ENCODE measurements at regions of chr7 and their contacts with region 1.

Region 1: DNA sequence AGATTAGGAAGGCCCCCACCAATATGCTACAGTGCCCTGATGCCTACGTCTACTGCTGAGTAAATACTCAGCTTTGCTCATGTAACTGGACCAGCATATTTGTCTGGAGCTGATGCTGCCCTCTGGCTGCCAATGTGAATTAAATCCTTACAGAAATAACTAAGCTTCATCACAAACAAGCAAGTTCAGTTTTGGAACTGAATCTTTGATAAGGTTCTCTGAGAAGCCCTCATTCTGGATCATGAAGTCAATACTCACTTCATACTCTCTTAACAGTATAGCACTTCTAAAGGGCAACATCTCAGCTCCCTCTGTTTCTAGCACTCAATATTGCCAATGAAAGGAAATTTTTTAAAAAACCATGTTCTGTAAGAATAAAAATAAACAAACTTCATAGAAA is 246.7 kb downstream of the ETV1 start:
- DNase-seq: peak; percentile 38 to 48
- H3K4me3 ChIP-seq: no peak overlapping the region
- H3K4me3 Mint-ChIP-seq: no peak overlapping the region
- H3K27ac Mint-ChIP-seq: no peak overlapping the region
- H3K4me1 ChIP-seq: peaks cover 12% of the 10 kb centered on the region; the same call in 1 of the 2 replicates
- H3K4me1 Mint-ChIP-seq: peaks cover 6% of the 10 kb centered on the region
- H3K27me3 ChIP-seq: no peaks in the 10 kb centered on the region
- H3K27me3 Mint-ChIP-seq: no peaks in the 10 kb centered on the region
- CTCF ChIP-seq: peak; percentile 48 to 49

Region 2: GRCh38 chr7:12674849-12675248 is 1068.0 kb before region 1 on chr7:
- CTCF ChIA-PET with region 1: no interaction called
- POLR2A ChIA-PET with region 1: no interaction called
- intact Hi-C with region 1: loop called (anchors 10 kb)
- DNase-seq: peak; percentile 49 to 72
- H3K4me3 ChIP-seq: no peak overlapping the region
- H3K4me3 Mint-ChIP-seq: no peak overlapping the region
- H3K27ac Mint-ChIP-seq: no peak overlapping the region
- H3K4me1 ChIP-seq: no peaks in the 10 kb centered on the region; the same call in 1 of the 2 replicates
- H3K4me1 Mint-ChIP-seq: peaks cover 19% of the 10 kb centered on the region
- H3K27me3 ChIP-seq: no peaks in the 10 kb centered on the region
- H3K27me3 Mint-ChIP-seq: no peaks in the 10 kb centered on the region
- CTCF ChIP-seq: peak; percentile 44 to 59

Region 3: GRCh38 chr7:13524076-13524475 is 218.7 kb before region 1 on chr7:
- CTCF ChIA-PET with region 1: no interaction called
- POLR2A ChIA-PET with region 1: no interaction called
- intact Hi-C with region 1: loop called (anchors 1 kb)
- DNase-seq: no peak
- H3K4me3 ChIP-seq: no peak overlapping the region
- H3K4me3 Mint-ChIP-seq: no peak overlapping the region
- H3K27ac Mint-ChIP-seq: no peak overlapping the region
- H3K4me1 ChIP-seq: no peaks in the 10 kb centered on the region
- H3K4me1 Mint-ChIP-seq: no peaks in the 10 kb centered on the region
- H3K27me3 ChIP-seq: no peaks in the 10 kb centered on the region
- H3K27me3 Mint-ChIP-seq: no peaks in the 10 kb centered on the region
- CTCF ChIP-seq: no peak